ENCODE measurements at regions of chr10 and their contacts with region 1.

Region 1: DNA sequence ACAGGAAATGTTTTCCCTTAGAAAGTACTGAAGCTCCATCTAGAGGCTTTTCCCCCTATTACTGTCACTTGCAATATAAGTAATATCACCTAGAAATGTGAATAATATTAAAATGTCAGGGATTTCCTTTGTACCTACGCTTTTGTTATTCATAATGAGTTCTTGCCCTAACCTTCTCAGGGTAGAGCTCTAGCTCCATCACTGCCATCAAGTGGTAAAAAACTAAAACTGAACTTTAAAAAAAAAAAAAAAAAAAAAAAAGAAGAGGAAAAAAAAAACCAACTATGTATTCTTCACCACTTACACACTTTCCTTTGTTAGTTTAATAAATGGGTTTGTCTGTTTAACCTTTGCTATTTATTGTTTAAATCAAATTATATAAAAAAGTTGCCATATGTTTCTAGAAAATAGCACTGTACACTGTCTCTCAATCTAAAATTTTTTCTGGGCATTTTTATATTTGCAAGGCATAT is 49.9 kb downstream of the DNAJC1 start:
- DNase-seq: no peak
- H3K4me3 Mint-ChIP-seq: no peak overlapping the region
- H3K27ac Mint-ChIP-seq: no peak overlapping the region
- H3K4me1 Mint-ChIP-seq: peaks cover 4% of the 10 kb centered on the region
- H3K27me3 Mint-ChIP-seq: no peaks in the 10 kb centered on the region

Region 2: DNA sequence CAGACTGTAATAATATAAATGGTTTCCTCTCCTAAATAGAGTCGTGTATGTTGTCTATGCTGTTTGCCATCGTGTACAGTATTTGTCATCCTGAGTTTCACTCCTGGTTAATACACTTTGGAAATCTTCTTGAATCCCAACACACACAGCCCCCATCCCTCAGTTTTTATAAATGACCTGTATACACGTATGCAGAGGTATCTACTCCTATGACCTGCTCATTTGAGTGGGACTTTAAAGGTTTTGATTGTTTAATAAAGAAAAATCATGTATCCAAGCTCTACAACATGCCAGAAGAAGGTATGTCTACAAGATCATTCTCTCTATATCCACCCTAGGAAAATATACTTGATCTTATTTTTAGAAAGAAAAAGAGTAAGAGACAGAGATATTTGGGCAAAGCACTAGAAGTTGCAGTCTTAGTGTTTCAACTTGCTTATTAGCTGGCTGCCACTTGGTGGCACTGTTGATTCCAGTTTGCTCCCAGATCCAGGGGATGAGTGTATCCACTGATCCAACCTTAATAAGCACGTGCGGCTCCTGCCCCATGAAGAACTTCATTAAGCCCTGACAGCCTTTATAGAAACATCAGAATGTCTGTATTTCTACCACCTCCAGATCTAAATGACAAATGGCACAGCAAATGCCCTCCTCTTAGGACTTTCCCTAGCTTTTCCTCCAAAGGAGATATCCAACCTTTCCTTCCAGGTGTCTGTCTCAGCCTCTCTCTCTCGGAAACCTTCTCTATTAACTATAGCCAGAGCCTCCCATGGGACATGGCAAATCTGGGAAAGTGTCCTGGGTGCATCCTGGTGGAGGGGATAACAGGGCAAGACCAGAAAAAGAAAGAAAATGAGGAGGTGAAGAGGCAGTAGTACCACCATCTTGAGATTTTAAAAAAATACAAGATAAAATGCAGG is 875.0 kb before region 1 on chr10:
- intact Hi-C with region 1: loop called (anchors 5 kb)
- DNase-seq: peak; percentile 69
- H3K4me3 Mint-ChIP-seq: no peak overlapping the region
- H3K27ac Mint-ChIP-seq: no peak overlapping the region
- H3K4me1 Mint-ChIP-seq: no peaks in the 10 kb centered on the region
- H3K27me3 Mint-ChIP-seq: no peaks in the 10 kb centered on the region

Region 3: DNA sequence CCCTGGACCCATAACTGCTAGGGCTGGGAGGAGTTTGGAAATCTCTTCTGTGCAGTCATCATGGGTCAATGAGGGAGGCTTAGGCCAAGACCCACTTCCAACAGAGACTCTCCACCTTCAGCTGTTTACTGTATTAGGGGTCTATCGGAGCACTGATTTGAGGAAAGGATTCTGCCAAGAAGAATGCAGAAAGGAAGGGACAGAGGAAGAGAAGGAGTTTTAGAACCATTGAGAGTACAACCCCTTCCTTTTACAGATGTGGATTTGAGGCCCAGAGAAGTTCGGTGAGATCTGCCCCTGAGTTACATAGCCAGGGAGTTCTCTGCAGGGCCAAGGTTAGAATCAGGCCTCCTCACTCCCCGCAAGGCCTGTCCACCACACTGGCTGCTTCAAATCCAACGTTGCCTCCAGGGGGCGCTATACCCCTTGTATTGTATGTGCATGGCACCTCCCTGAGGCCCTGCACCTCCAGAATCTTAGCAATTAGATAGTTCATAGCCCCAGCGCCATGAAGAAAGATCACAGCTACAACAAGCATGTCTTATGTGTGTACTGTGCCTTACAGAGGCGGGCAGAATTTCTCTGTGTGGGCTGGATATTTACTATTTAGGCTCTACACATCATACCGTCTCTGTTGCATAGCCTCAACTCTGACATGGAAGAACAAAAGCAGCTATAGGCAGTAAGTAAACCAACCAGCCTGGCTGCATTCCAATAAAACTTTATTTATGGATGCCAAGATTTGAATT is 675.0 kb before region 1 on chr10:
- intact Hi-C with region 1: loop called (anchors 10 kb)
- DNase-seq: peak; percentile 89
- H3K4me3 Mint-ChIP-seq: no peak overlapping the region
- H3K27ac Mint-ChIP-seq: no peak overlapping the region
- H3K4me1 Mint-ChIP-seq: no peaks in the 10 kb centered on the region
- H3K27me3 Mint-ChIP-seq: no peaks in the 10 kb centered on the region

Region 4: DNA sequence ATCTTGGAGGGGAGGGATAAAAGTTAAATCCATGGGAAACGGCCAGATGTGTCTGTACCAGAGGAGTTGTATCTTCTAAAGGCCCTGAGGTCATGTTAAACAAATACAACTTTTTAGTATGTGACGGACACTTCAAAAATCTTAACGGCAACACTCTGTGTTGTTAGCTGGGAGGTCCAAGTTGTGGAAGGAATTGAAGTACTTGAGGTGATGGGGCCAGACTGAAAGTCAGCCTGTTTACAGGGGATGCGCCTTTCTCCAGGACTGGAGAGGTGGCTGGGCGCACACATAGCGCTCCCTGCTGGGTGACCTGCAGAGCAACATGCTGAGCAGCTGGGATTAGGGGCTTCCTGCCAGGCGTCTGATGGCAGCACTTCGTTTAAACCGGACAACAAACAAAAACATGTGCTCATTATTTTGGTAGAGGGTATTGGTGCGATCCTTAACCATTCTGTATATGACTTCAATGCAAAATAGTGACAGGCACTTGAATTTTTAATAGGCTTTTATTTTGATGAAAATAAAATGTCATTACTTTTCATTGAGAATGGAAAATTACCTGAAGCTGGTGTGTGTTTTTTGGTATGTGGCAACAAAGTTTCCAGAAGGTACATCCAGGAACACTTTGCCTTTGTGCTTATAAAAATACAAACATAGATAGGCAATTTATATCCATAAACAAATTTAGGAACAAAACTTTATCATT is 221.4 kb before region 1 on chr10:
- intact Hi-C with region 1: loop called (anchors 10 kb)
- DNase-seq: peak; percentile 84
- H3K4me3 Mint-ChIP-seq: no peak overlapping the region
- H3K27ac Mint-ChIP-seq: no peak overlapping the region
- H3K4me1 Mint-ChIP-seq: peaks cover 23% of the 10 kb centered on the region
- H3K27me3 Mint-ChIP-seq: no peaks in the 10 kb centered on the region

Region 5: DNA sequence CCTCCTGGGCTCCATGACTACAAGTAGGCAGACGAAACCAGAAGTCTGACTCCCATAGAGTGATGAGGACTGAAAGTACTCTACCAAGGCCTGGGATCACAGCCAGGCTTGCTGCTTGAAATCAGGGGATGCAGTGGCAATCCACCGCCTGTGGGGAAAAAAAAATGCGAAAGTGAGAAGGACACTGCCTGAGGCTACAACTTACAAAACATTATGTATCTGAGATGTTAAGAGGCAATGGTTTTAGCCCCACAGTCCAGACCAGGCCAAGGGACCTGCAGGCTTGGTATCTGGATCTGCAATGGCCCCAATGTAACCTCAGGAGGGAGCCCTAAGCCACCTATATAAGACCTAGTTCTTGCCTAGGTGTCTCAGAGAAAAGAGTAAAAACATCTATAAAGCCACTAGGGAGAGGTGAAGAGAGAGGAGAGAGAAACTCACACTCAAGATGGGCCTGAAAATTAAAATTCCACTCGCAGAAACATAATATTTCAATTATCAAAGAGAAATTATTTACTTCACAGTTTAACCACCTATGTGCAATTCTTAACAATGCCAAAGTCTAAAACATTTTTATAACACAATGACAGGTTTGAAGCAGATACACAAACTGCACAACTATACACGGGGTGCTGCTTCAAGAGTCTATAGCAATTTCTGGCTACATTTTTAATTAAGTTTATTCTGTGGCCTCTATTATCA is 36.0 kb after region 1 on chr10:
- intact Hi-C with region 1: no loop called
- DNase-seq: peak; percentile 79
- H3K4me3 Mint-ChIP-seq: no peak overlapping the region
- H3K27ac Mint-ChIP-seq: no peak overlapping the region
- H3K4me1 Mint-ChIP-seq: peaks cover 7% of the 10 kb centered on the region
- H3K27me3 Mint-ChIP-seq: no peaks in the 10 kb centered on the region

Measured in activated CD4-positive, alpha-beta T cell treated with anti-CD3 and anti-CD28 coated beads, Interleukin-2, amount 10 ng/mL, durations not matched to agents 24 days and 14 days (primary cell).